Left colon (tissue), 2 donors: ENCODE measurements at regions of chr6 and their contacts with region 1.

Region 1: DNA sequence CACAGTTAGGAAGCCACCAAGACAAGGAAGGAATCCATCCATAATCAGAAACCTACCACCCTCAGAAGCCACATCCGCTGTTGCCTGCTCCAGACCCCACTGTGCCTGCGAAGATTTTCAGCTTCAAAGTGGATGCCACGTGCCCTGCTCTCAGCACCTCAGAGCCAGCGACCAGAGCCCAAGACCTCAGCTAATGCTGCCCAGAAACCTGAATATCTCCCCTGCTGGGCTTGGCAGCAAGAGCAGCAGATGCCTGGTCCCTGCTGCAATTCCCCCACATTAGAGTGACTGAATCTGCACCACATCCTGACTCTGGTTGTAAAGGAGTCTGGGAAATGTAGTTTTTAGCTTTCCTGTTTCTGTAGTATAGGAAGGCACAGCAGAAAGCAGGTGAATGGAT is 10.7 kb upstream of the ULBP3 start:
- DNase-seq: no peak
- ATAC-seq: peak; percentile 34

Region 2: GRCh38 chr6:149771925-149772324 is 307.7 kb before region 1 on chr6:
- intact Hi-C with region 1: no loop called
- DNase-seq: no peak
- ATAC-seq: no peak

Region 3: GRCh38 chr6:150334790-150335783 is 255.5 kb after region 1 on chr6:
- intact Hi-C with region 1: loop called (anchors 5 to 10 kb)
- DNase-seq: peak in 1 of 2 donors; percentile 37
- ATAC-seq: peak; percentile 65

Region 4: DNA sequence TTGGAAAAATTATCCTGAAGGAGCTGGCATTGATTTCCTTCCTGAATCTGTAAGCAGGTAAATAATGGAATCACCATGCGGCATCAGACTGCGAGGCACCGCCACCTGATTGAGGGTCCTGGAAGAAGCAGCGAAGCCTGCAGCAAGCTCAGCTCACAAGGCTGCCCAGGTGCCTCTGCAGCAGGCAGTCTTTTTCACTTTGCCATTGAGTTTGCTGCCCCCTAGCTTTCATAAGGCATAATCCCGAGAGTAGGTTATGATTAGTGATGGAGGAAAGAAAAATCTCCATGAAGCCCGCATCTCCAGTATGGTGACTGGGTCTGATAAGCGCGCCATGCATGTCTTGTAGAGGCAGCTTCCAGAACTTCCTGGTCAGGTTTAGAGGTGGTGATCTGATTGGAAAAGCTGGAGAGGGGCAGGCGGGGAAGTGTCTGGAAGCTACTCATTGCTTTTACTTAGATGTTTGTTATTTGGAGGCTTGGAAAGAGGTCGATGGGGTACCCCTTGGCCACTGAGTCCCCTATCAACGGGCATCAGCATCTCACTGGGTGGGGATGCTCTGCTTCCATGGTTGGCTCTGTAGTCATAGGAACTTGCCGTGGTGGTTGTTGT is 315.9 kb after region 1 on chr6:
- intact Hi-C with region 1: loop called in 1 of 2 experiments (anchors 10 kb)
- DNase-seq: peak in 1 of 2 donors; percentile 47
- ATAC-seq: peak; percentile 92